A549 (cell line): ENCODE measurements at regions of chr12 and their contacts with region 1.

Region 1: GRCh38 chr12:94101738-94102660 is 46.4 kb upstream of the PLXNC1 start:
- DNase-seq: peak; percentile 66 to 90
- ATAC-seq: peak; percentile 78 to 90
- H3K4me3 ChIP-seq: peak overlapping the region; percentile 61
- H3K27ac ChIP-seq: peak overlapping the region; percentile 77 to 85
- H3K4me1 ChIP-seq: peaks cover 28% of the 10 kb centered on the region; the same call in 2 of the 3 replicates
- CTCF ChIP-seq: peak; percentile 77
- EP300 ChIP-seq: no peak
- POLR2A ChIP-seq: no peak
- RAD21 ChIP-seq: peak; percentile 93

Region 2: DNA sequence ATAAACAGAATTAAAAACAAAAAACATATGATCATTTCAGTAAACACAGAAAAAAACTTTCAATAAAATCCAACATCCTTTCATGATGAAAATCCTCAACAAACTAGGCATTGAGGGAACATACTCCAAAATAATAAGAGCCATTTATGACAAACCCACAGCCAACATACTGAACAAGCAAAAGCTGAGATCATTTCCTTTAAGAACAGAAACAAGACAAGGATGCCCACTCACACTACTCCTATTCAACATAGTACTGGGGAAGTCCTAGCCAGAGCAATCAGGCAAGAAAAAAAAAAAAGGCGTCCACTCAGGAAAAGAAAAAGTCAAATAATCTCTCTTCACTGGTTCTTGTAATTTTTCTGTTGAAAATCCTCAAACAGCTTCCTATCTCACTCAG is 604.5 kb before region 1 on chr12:
- CTCF ChIA-PET with region 1: interaction called, 334 read pairs
- POLR2A ChIA-PET with region 1: interaction called, 9 read pairs
- DNase-seq: no peak
- ATAC-seq: no peak
- H3K4me3 ChIP-seq: no peak overlapping the region
- H3K27ac ChIP-seq: no peak overlapping the region
- H3K4me1 ChIP-seq: no peaks in the 10 kb centered on the region
- CTCF ChIP-seq: no peak
- EP300 ChIP-seq: no peak
- POLR2A ChIP-seq: no peak
- RAD21 ChIP-seq: no peak

Region 3: GRCh38 chr12:93563807-93564538 is 538.0 kb before region 1 on chr12:
- CTCF ChIA-PET with region 1: interaction called, 232 read pairs
- POLR2A ChIA-PET with region 1: interaction called, 15 read pairs
- DNase-seq: peak; percentile 76 to 89
- ATAC-seq: peak; percentile 96 to 97
- H3K4me3 ChIP-seq: no peak overlapping the region
- H3K27ac ChIP-seq: peak overlapping the region; percentile 63 to 77
- H3K4me1 ChIP-seq: peaks cover 27% of the 10 kb centered on the region
- CTCF ChIP-seq: peak; percentile 53
- EP300 ChIP-seq: peak; percentile 48 to 73; a peak in 2 of 5 replicates
- POLR2A ChIP-seq: no peak
- RAD21 ChIP-seq: peak; percentile 52 to 70

Region 4: DNA sequence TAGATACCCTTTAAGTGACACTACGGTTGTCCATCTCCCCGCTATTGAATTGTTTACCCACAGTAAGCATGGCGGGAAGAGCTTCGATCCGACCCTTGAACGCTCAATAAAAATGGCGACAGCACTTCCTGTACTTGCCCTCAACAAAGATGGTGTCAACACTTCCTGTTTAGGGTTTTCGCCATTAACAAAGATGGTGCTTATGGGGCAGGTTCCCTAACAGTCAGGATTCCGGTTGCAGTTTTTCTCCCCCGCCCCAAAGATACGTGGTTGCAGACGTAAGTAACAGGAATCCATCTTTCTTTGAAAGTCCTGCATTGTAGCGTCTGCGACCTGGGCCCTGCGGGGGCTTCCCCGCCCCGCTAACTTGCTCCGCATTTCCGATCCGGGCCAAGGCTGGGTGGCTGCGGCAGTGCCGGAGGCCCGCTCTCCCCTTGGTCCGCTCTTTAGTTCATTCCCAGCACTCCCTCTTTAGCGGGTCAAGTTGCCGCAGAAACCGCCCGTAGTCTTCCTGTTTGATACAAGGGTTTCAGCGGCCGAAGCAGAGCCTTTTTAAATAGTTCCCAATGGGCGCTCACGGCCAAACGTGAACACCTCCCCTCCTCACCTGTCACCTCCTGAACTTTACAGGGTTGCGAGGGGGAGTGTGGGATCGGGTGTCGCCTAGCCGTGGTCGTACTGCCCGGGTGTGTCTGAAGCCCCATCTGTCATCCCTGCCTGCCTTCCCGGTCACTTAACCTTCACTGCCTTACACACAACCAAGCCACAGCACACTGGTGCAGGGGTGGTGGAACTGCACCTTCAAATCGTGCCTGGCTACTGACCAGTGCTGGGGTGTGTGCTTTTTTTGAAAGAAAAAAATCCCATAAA is 424.6 kb before region 1 on chr12 and contains the start of gene CRADD:
- CTCF ChIA-PET with region 1: interaction called, 10 read pairs
- POLR2A ChIA-PET with region 1: interaction called, 6 read pairs
- DNase-seq: peak; percentile 76 to 99
- ATAC-seq: peak; percentile 90 to 96
- H3K4me3 ChIP-seq: peak within 1 kb of the TSS; percentile 79
- H3K27ac ChIP-seq: peak within 1 kb of the TSS; percentile 92 to 93
- H3K4me1 ChIP-seq: peaks cover 7% of the 10 kb centered on the region; the same call in 2 of the 3 replicates
- CTCF ChIP-seq: no peak
- EP300 ChIP-seq: no peak
- POLR2A ChIP-seq: peak; percentile 59
- RAD21 ChIP-seq: no peak; a peak in 2 of 5 replicates
- polyA plus RNA-seq, gene CRADD: 21.8 and 23.0 TPM in 2 replicates

Region 5: GRCh38 chr12:93773122-93773871 is 328.7 kb before region 1 on chr12:
- CTCF ChIA-PET with region 1: interaction called, 153 read pairs
- POLR2A ChIA-PET with region 1: no interaction called
- DNase-seq: no peak
- ATAC-seq: no peak
- H3K4me3 ChIP-seq: no peak overlapping the region
- H3K27ac ChIP-seq: 0 out of 6 replicates have a peak overlapping the region, but pooled peaks of 1 of the 2 experiments have one; percentile 11
- H3K4me1 ChIP-seq: peaks cover 13% of the 10 kb centered on the region; the same call in 2 of the 3 replicates
- CTCF ChIP-seq: no peak
- EP300 ChIP-seq: no peak
- POLR2A ChIP-seq: no peak
- RAD21 ChIP-seq: no peak

Region 6: GRCh38 chr12:94074980-94075928 is 26.7 kb before region 1 on chr12:
- CTCF ChIA-PET with region 1: interaction called, 103 read pairs
- POLR2A ChIA-PET with region 1: no interaction called
- DNase-seq: peak; percentile 64 to 66
- ATAC-seq: peak; percentile 82 to 92
- H3K4me3 ChIP-seq: no peak overlapping the region
- H3K27ac ChIP-seq: peak overlapping the region in 1 of 2 experiments; percentile 62; a peak in 3 of 6 replicates
- H3K4me1 ChIP-seq: peaks cover 3% of the 10 kb centered on the region; the same call in 1 of the 3 replicates
- CTCF ChIP-seq: peak; percentile 51
- EP300 ChIP-seq: no peak
- POLR2A ChIP-seq: no peak
- RAD21 ChIP-seq: peak; percentile 64 to 70